ENCODE measurements at regions of chr4 and their contacts with region 1.

Region 1: GRCh38 chr4:176185067-176185466 is 10.3 kb downstream of the SPATA4 start:
- DNase-seq: peak; percentile 45 to 66
- ATAC-seq: peak; percentile 94 to 97
- H3K4me3 ChIP-seq: no peak overlapping the region
- H3K27ac ChIP-seq: peak overlapping the region; percentile 82 to 91 (median 86)
- H3K4me1 ChIP-seq: peaks cover 58 to 59% of the 10 kb centered on the region in 2 donors
- H3K27me3 ChIP-seq: no peaks in the 10 kb centered on the region
- CTCF ChIP-seq: no peak
- POLR2A ChIP-seq: no peak

Region 2: DNA sequence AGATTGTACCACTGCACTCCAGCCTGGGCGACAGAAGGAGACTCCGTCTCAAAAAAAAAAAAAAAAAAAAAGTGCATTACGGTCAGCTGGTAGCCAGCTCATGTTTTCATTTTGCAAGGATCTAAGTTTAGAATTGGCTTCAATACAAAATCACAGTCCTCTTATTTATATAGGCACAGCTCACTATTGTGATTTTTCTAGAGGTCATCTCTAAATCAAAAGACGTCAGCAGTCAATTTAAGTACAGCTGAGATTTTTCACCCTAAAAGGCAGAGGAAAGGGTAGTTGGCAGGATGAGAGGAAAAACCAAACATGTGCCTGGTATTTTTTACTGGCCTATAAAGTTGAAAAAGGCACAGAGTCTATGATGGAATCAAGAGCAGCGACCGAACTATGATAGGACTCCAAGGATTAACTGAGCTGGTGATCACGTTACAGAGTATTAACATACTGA is 53.1 kb after region 1 on chr4:
- in situ Hi-C with region 1: no loop called
- intact Hi-C with region 1: loop called (anchors 2 kb)
- DNase-seq: no peak
- ATAC-seq: peak; percentile 81 to 87
- H3K4me3 ChIP-seq: peak overlapping the region; percentile 1 to 32 (median 28)
- H3K27ac ChIP-seq: peak overlapping the region; percentile 82 to 91 (median 86)
- H3K4me1 ChIP-seq: peaks cover 21 to 70% of the 10 kb centered on the region in 2 donors
- H3K27me3 ChIP-seq: no peaks in the 10 kb centered on the region
- CTCF ChIP-seq: no peak
- POLR2A ChIP-seq: peak; percentile 6 to 25

Region 3: GRCh38 chr4:176270669-176271068 is 85.6 kb after region 1 on chr4:
- in situ Hi-C with region 1: no loop called
- intact Hi-C with region 1: loop called (anchors 2 kb)
- DNase-seq: peak; percentile 88 to 93
- ATAC-seq: peak; percentile 83
- H3K4me3 ChIP-seq: peak overlapping the region in 2 of 4 donors; percentile 21 to 62
- H3K27ac ChIP-seq: peak overlapping the region; percentile 88 to 98 (median 94)
- H3K4me1 ChIP-seq: peaks cover 25 to 47% of the 10 kb centered on the region in 2 donors
- H3K27me3 ChIP-seq: no peaks in the 10 kb centered on the region
- CTCF ChIP-seq: no peak
- POLR2A ChIP-seq: peak; percentile 47 to 67

Region 4: DNA sequence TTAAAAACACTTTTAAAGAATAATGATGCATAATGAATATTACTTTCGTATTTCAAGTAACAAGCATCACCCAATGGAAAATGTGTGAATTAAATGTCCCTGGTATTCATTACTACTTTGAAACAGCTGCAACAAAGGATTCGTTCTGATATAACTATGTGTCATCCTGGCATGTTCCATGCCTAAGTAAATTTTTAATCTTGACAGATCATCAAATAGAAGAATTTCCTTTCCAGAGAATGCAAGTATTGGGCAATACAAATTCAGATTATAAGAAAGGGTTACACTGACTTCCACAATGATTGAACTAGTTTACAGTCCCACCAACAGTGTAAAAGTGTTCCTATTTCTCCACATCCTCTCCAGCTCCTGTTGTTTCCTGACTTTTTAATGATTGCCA is 240.0 kb after region 1 on chr4:
- in situ Hi-C with region 1: no loop called
- intact Hi-C with region 1: no loop called
- DNase-seq: no peak
- ATAC-seq: no peak
- H3K4me3 ChIP-seq: no peak overlapping the region
- H3K27ac ChIP-seq: no peak overlapping the region
- H3K4me1 ChIP-seq: no peaks in the 10 kb centered on the region
- H3K27me3 ChIP-seq: no peaks in the 10 kb centered on the region
- CTCF ChIP-seq: no peak
- POLR2A ChIP-seq: no peak